ENCODE measurements at regions of chr10 and their contacts with region 1.

Region 1: GRCh38 chr10:87771871-87772500 is 46.0 kb downstream of the ATAD1 start:
- DNase-seq: no peak
- ATAC-seq: no peak
- H3K4me3 ChIP-seq: no peak overlapping the region
- H3K27ac ChIP-seq: no peak overlapping the region
- H3K4me1 ChIP-seq: no peaks in the 10 kb centered on the region
- H3K27me3 ChIP-seq: no peaks in the 10 kb centered on the region
- CTCF ChIP-seq: peak in 2 of 5 experiments; percentile 41 to 50
- POLR2A ChIP-seq: no peak

Region 2: GRCh38 chr10:86486856-86487255 is 1285.1 kb before region 1 on chr10:
- in situ Hi-C with region 1: no loop called
- intact Hi-C with region 1: no loop called
- DNase-seq: no peak
- ATAC-seq: no peak
- H3K4me3 ChIP-seq: no peak overlapping the region
- H3K27ac ChIP-seq: no peak overlapping the region
- H3K4me1 ChIP-seq: peaks cover 15 to 34% of the 10 kb centered on the region in 2 donors
- H3K27me3 ChIP-seq: no peaks in the 10 kb centered on the region
- CTCF ChIP-seq: no peak
- POLR2A ChIP-seq: no peak

Region 3: GRCh38 chr10:87531908-87532622 is 239.9 kb before region 1 on chr10:
- in situ Hi-C with region 1: loop called in 2 of 4 experiments (anchors 25 kb)
- intact Hi-C with region 1: loop called (anchors 5 kb)
- DNase-seq: no peak
- ATAC-seq: peak; percentile 46 to 75
- H3K4me3 ChIP-seq: peak overlapping the region in 1 of 4 donors; percentile 20
- H3K27ac ChIP-seq: peak overlapping the region; percentile 56 to 75 (median 64)
- H3K4me1 ChIP-seq: peaks cover 0 to 7% of the 10 kb centered on the region in 2 donors
- H3K27me3 ChIP-seq: no peaks in the 10 kb centered on the region
- CTCF ChIP-seq: no peak
- POLR2A ChIP-seq: no peak

Region 4: GRCh38 chr10:87547734-87548311 is 224.2 kb before region 1 on chr10:
- in situ Hi-C with region 1: loop called in 2 of 4 experiments (anchors 25 kb)
- intact Hi-C with region 1: no loop called
- DNase-seq: no peak
- ATAC-seq: no peak
- H3K4me3 ChIP-seq: no peak overlapping the region
- H3K27ac ChIP-seq: no peak overlapping the region
- H3K4me1 ChIP-seq: no peaks in the 10 kb centered on the region
- H3K27me3 ChIP-seq: no peaks in the 10 kb centered on the region
- CTCF ChIP-seq: no peak
- POLR2A ChIP-seq: no peak

Region 5: GRCh38 chr10:87562750-87563149 is 209.2 kb before region 1 on chr10:
- in situ Hi-C with region 1: no loop called
- intact Hi-C with region 1: no loop called
- DNase-seq: no peak
- ATAC-seq: no peak
- H3K4me3 ChIP-seq: no peak overlapping the region
- H3K27ac ChIP-seq: no peak overlapping the region
- H3K4me1 ChIP-seq: no peaks in the 10 kb centered on the region
- H3K27me3 ChIP-seq: peaks cover 0 to 2% (median 0%) of the 10 kb centered on the region in 3 donors
- CTCF ChIP-seq: no peak
- POLR2A ChIP-seq: no peak

Region 6: DNA sequence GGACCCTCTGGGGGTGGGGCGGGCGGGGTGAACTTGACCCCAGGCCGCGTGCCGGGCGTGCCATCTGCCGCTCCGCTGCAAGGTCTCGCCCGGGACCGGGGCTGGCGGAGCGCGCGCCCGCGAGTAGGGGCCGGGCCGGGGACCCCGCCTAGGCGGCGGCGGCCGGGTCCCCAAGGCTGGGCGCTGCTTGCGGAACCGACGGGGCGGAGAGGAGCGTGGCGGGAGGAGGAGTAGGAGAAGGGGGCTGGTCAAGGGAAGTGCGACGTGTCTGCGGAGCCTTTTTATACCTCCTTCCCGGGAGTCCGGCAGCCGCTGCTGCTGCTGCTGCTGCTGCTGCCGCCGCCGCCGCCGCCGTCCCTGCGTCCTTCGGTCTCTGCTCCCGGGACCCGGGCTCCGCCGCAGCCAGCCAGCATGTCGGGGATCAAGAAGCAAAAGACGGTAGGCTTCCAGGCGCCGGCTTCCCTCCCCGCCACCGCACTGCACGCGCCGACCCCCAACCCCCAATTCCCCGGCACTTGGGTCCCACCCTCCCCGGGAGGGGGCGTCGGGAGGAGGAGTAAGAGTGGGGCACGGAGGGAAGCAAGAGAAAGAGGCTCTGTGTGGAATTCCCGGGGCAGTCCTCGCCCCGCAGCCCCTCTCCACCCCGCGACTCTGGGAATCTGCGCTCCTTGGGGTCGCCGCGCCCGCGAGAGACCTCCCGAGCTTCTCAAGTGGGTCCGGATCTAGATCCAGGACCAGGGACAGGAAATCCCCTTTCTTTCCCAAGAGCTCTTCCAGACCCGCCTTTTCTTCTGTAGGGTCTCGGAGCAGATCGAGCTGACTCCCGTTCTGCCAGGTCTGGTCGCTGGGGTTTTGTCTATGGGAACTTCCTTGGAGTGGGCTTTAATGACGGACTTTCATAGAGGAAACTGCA is 112.2 kb before region 1 on chr10 and contains the start of gene PAPSS2:
- in situ Hi-C with region 1: no loop called
- intact Hi-C with region 1: loop called (anchors 2 kb)
- DNase-seq: peak; percentile 21 to 30
- ATAC-seq: peak; percentile 34 to 59
- H3K4me3 ChIP-seq: peak within 1 kb of the TSS; percentile 61 to 84 (median 70)
- H3K27ac ChIP-seq: peak within 1 kb of the TSS; percentile 62 to 77 (median 68)
- H3K4me1 ChIP-seq: peaks cover 0 to 7% of the 10 kb centered on the region in 2 donors
- H3K27me3 ChIP-seq: peaks cover 8 to 19% (median 10%) of the 10 kb centered on the region in 3 donors
- CTCF ChIP-seq: no peak
- POLR2A ChIP-seq: peak; percentile 35 to 60
- total RNA-seq, gene PAPSS2: 2.7 to 8.7 (median 6.8) TPM